Psoas muscle (tissue), 8 donors: ENCODE measurements at regions of chr5 and their contacts with region 1.

Region 1: GRCh38 chr5:176901260-176902101 is 2.3 kb upstream of the HK3 start:
- DNase-seq: no peak
- ATAC-seq: no peak
- H3K4me3 ChIP-seq: no peak overlapping the region
- H3K27ac ChIP-seq: no peak overlapping the region
- H3K4me1 ChIP-seq: peaks cover 3% of the 10 kb centered on the region
- H3K27me3 ChIP-seq: no peaks in the 10 kb centered on the region
- CTCF ChIP-seq: no peak

Region 2: DNA sequence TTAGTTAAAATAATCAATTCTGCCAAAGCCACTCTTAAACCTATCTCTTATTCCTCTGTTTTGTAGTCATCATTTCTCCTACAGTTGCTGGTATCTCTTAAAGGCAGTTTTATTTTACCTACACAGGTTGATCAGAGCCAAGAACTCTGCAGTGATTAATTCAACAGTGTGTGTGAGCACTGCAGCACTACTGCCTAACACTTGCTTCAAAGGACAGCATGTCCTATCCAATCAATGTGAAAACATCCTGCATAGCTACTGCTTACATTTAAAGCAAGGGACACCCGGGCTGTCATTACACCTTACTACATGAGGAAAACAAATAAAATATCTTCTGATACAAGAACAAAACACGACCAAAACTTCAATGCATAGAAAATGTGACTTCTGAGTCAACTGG is 42.8 kb after region 1 on chr5:
- intact Hi-C with region 1: loop called in 1 of 2 experiments (anchors 5 kb)
- DNase-seq: no peak
- ATAC-seq: peak in 1 of 4 donors; percentile 41
- H3K4me3 ChIP-seq: no peak overlapping the region
- H3K27ac ChIP-seq: no peak overlapping the region
- H3K4me1 ChIP-seq: no peaks in the 10 kb centered on the region
- H3K27me3 ChIP-seq: no peaks in the 10 kb centered on the region
- CTCF ChIP-seq: no peak